Activated naive CD4-positive, alpha-beta T cell treated with anti-CD3 and anti-CD28 coated beads for 36 hours (primary cell): ENCODE measurements at regions of chr13 and their contacts with region 1.

Region 1: DNA sequence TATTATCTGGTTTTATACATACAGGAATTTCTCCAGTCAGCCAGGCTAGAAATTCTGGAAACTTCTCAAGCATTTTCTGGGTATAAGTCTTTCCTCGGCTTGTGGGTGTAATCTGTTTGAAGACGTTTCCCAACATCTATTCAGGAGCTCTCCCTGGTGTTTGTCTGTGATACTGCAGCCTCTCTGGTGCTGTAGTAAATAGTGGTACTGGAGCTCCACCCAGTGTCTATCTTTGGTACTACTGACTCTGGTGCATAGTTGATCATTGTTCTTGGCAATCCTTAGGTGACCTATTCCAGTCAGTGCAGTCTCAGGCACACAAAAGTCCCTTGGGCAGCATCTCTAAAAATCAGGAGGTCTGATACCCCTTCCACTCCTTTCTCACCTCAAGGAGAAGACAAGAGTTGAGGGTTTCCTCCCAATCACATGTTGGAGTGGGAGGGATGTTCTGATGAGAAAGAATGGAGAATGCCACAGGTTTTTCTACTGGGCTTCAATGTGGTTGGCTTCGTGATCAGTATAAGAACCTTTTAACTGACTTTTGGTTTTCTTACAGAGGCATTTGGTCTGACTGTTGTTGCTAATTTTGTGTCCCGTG is 115.5 kb downstream of the CYSLTR2 start:
- DNase-seq: peak; percentile 93
- H3K4me3 Mint-ChIP-seq: no peak overlapping the region
- H3K27ac Mint-ChIP-seq: no peak overlapping the region
- H3K4me1 Mint-ChIP-seq: peaks cover 15% of the 10 kb centered on the region
- H3K27me3 Mint-ChIP-seq: peaks cover 4% of the 10 kb centered on the region

Region 2: GRCh38 chr13:46893798-46894560 is 1875.2 kb before region 1 on chr13:
- CTCF ChIA-PET with region 1: no interaction called
- intact Hi-C with region 1: loop called (anchors 10 kb)
- DNase-seq: peak; percentile 66
- H3K4me3 Mint-ChIP-seq: peak overlapping the region; percentile 53
- H3K27ac Mint-ChIP-seq: no peak overlapping the region
- H3K4me1 Mint-ChIP-seq: peaks cover 12% of the 10 kb centered on the region
- H3K27me3 Mint-ChIP-seq: peaks cover 55% of the 10 kb centered on the region

Region 3: GRCh38 chr13:48043789-48044503 is 725.3 kb before region 1 on chr13:
- CTCF ChIA-PET with region 1: no interaction called
- intact Hi-C with region 1: loop called (anchors 1 kb)
- DNase-seq: no peak
- H3K4me3 Mint-ChIP-seq: no peak overlapping the region
- H3K27ac Mint-ChIP-seq: peak overlapping the region; percentile 80
- H3K4me1 Mint-ChIP-seq: peaks cover 39% of the 10 kb centered on the region
- H3K27me3 Mint-ChIP-seq: no peaks in the 10 kb centered on the region

Region 4: DNA sequence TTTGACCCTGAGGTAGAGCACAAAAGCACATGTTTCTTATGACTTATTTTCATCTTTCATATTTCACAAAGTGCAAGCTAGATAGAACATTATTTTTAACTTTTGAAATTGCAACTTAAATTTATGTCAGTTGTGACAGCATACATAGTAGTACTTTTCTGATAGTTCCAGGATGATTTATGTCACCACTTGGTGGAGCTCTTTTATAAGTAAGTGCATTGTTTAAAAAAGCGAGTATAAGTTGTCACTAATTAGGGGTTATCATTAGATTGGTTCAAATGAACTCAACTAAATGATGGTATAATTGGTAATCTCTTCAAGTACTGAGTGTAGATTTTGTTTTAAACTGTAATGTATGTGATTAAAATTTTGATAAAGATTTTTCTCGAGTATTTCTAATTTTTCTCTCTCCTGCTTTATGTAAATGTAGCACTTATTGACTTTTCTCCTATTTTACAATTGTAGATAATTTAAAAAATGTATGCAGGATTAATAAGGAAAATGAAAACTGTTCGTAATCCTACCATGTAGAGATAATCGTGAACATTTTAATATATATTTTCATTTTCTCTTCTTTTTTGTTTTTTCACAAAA is 434.6 kb before region 1 on chr13:
- CTCF ChIA-PET with region 1: interaction called, 8 read pairs
- intact Hi-C with region 1: loop called (anchors 1 kb)
- DNase-seq: no peak
- H3K4me3 Mint-ChIP-seq: no peak overlapping the region
- H3K27ac Mint-ChIP-seq: no peak overlapping the region
- H3K4me1 Mint-ChIP-seq: peaks cover 3% of the 10 kb centered on the region
- H3K27me3 Mint-ChIP-seq: no peaks in the 10 kb centered on the region

Region 5: GRCh38 chr13:48643159-48643558 is 126.0 kb before region 1 on chr13:
- CTCF ChIA-PET with region 1: no interaction called
- intact Hi-C with region 1: loop called (anchors 1 kb)
- DNase-seq: no peak
- H3K4me3 Mint-ChIP-seq: no peak overlapping the region
- H3K27ac Mint-ChIP-seq: no peak overlapping the region
- H3K4me1 Mint-ChIP-seq: no peaks in the 10 kb centered on the region
- H3K27me3 Mint-ChIP-seq: no peaks in the 10 kb centered on the region

Region 6: GRCh38 chr13:48731957-48732569 is 37.1 kb before region 1 on chr13:
- CTCF ChIA-PET with region 1: interaction called, 7 read pairs
- intact Hi-C with region 1: loop called (anchors 1 kb)
- DNase-seq: peak; percentile 65
- H3K4me3 Mint-ChIP-seq: peak overlapping the region; percentile 58
- H3K27ac Mint-ChIP-seq: no peak overlapping the region
- H3K4me1 Mint-ChIP-seq: peaks cover 19% of the 10 kb centered on the region
- H3K27me3 Mint-ChIP-seq: peaks cover 3% of the 10 kb centered on the region